ENCODE measurements at regions of chr15 and their contacts with region 1.

Region 1: DNA sequence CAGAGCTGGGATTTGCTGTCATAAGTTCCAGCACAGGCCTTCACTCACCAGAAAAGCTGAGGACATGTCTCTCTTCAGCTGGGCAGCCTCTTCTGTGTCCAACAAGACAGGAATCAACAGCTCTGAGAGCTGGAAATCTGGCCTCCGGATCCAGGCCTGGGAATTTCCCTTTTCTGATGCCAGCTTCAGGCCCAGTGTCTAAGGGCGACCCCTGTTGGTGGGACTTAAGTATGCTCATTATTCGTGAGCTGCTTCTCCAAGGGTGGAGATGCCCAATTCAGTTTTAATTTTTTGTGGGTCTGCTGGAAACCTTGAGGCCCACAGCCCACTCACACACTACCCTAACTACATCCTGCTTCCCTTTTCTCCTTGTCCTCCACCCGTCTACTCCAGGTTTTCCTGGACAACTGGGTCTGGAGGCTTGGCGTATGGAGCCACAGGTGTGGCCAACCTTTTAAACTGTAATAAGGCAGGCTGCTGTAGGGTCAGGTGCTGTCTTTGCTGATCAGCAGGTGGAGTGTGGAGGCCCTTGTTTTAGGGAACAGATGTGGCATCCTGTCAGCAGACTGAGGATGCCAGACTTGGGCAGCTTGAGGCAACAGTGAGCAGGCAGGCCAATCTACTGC is 2.6 kb upstream of the CEMIP start:
- DNase-seq: peak; percentile 47 to 94 (median 73)

Region 2: DNA sequence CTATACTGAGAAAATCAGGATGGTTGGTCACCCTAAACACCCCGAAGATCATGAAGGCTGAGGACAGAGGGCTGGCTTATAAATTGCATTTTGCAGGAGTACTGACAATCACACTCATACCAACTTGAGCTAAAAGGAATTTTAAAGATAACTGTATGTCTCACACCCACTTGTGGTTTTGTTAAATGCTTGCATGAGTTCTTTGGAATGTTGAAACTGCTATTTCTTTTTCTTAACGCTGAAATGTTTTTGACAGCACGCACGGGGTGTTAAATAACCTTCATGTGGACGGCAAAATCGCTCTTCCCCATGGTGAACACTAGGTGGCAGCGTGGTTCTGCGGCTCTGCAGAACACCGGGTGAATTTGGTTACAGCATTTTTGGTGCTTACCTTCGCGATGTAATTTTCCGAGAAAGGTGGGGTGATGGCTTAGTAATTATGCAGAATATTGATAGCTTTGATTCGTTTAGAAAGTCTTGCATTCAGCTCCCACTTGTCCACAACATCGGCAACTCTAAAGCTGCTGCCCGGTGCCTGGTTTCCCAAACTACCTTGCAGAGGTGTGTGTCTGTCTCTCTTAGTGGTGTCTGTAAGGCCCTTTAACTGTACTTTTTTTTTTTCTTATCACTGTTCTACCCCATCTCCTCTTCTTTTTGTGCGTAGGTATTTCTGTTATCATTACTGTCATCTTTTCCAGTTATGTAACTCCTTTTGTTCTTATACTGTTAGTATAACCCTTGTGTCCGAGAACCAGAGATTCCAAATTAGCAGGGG is 320.7 kb before region 1 on chr15:
- intact Hi-C with region 1: loop called (anchors 1 kb)
- DNase-seq: peak in 7 of 10 donors; percentile 42 to 94 (median 67)

Region 3: DNA sequence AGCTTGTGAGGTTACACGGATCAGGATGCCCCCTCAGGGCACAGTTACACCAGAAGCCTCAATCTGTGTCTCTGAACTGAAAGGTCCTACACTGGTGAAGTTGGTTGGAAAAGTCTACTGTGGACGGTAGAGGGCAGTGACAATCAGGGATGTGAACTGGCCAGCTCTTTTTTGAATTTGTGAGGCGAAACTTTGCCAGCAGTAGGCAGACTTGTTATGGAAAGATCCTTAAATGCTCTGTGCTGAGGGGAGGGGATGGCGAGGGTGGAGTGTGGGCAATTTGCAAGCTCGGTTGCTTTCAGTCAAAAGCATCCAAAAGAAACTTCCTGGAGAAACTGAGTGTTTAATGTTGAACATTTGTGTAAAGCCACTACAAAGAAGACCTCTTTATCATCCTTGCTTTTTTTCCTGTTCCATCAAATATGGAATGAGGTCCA is 208.8 kb before region 1 on chr15:
- intact Hi-C with region 1: loop called (anchors 2 kb)
- DNase-seq: peak; percentile 27 to 94 (median 50)

Region 4: GRCh38 chr15:80615761-80616391 is 160.7 kb before region 1 on chr15:
- intact Hi-C with region 1: loop called (anchors 2 kb)
- DNase-seq: peak in 2 of 10 donors; percentile 71 to 74

Region 5: GRCh38 chr15:80643431-80643951 is 133.0 kb before region 1 on chr15:
- intact Hi-C with region 1: no loop called
- DNase-seq: no peak

Region 6: GRCh38 chr15:80695104-80695910 is 81.2 kb before region 1 on chr15 and contains the start of gene ABHD17C:
- intact Hi-C with region 1: loop called (anchors 10 kb)
- DNase-seq: peak; percentile 27 to 92 (median 45)

Region 7: DNA sequence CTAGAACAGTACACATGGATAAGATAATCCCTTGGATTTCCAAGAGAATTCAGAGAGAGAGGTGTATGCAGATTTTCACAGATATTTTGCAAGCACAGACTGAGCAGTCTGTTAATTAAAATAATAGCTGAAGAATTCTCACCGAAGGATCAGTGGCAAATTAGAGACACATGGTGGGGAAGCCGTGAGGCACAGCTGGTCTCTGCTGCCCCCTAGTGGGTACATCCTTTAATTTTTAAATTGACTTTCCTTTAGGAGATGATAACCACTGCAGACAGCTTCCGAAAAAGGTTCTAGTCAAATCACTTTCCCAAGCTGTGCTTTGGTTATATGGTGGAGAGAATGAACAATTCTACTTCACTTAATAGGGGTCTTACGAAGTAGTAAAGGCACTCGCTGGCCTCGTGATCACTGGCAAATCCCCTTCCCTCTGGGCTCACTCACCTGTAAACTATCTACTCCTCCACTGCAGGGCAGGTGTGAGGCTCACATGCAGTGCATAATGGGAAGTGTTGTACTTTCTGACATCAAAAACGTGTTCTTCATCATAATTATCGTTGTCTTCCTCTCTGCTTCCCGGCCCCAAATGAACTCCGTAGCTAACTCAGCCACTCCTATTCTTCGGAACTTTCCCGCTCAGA is 193.6 kb after region 1 on chr15:
- intact Hi-C with region 1: loop called (anchors 2 kb)
- DNase-seq: peak in 8 of 10 donors; percentile 39 to 92 (median 66)

Region 8: DNA sequence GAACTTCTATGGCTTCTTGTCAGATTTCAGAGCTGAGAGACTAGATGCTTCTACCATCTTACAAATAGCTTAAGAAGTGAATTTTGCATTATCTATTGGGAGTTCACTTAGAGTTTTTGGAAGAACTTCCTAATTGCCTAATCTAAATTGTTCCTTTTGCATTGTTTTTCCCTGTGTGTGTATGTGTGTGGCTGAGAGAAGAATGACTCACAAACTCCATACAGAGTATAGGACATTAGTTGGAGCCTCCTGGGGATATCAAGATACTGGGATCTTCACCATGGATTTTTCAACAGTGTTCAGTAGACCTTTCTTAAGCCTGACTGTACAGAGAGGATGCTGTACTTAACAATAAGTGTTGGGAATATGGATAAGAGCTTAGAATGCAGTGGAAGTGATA is 235.1 kb after region 1 on chr15:
- intact Hi-C with region 1: no loop called
- DNase-seq: no peak

Measured in posterior cingulate gyrus (tissue), 11 donors.